Activated T-helper 1 cell treated with anti-CD3 and anti-CD28 coated beads, Interleukin-12 subunit alpha, Interleukin-12 subunit beta, Interleukin-2, Interleukin-4 antibody, amounts not matched to agents 30 ng/mL and 10 ng/mL and 1 ng/mL, durations not matched to agents 14 hours and 24 hours and 36 hours (primary cell): ENCODE measurements at regions of chr16 and their contacts with region 1.

Region 1: DNA sequence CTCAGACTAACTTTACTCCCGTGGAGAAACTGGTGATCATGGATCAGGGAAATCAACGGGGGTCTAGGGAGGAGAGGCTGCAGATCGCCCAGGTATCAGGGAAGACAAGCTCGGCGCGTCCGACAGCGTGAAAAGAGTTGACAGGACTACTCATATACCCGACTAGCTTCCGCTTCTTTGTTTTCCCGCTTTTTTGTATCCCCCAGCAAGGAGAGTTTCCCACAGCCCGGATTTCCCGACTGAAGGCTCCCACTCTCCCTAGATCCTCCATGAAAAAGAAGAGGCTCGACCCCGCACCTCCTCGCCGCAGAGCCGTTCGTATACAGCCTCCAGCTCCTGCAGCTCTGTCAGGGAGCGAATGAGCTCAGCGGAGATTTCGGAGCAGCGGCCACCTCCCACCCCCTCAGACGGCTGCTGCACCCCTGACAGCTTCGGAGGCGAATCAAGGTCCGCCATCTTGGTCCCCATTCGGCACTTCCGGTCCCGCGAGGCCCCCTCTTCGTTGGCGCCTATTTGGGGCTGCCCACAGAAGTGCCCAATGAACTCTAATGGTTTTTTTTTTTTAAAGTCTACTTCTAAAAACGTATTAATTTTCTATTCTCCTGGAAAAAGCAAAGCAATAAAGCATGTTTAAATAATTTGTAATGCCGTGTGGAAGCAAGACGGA is at the start of gene COG4:
- DNase-seq: peak; percentile 87
- H3K4me3 Mint-ChIP-seq: peak within 1 kb of the TSS; percentile 95
- H3K27ac Mint-ChIP-seq: peak within 1 kb of the TSS; percentile 97
- H3K4me1 Mint-ChIP-seq: peaks cover 49% of the 10 kb centered on the region
- H3K27me3 Mint-ChIP-seq: no peaks in the 10 kb centered on the region
- total RNA-seq, gene COG4: 42.5 and 44.1 TPM in 2 replicates

Region 2: GRCh38 chr16:70251629-70252354 is 271.4 kb before region 1 on chr16 and contains the start of gene EXOSC6:
- intact Hi-C with region 1: loop called (anchors 1 kb)
- DNase-seq: peak; percentile 90
- H3K4me3 Mint-ChIP-seq: peak within 1 kb of the TSS; percentile 91
- H3K27ac Mint-ChIP-seq: peak within 1 kb of the TSS; percentile 96
- H3K4me1 Mint-ChIP-seq: peaks cover 10% of the 10 kb centered on the region
- H3K27me3 Mint-ChIP-seq: no peaks in the 10 kb centered on the region
- total RNA-seq, gene EXOSC6: 40.5 and 42.1 TPM in 2 replicates

Region 3: DNA sequence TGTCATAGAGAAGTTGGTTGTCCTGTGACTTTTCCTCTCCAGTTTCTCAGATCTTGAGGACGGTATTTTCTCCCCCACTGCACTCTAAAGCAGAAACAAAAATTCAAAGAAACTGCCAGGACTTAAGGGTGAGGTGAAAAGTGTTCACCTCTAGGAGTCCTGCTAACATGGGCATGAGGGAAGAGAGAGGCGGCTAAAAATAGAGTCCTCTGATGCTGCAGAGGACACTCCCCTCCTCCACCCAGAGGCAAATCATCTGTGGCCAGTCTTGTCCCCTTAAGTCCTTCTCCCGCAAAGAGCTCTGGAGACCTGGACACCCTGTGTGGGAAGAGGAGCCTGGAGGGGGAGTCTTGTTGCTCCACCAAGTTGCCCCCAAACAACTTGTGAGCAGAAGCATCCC is 181.2 kb before region 1 on chr16:
- intact Hi-C with region 1: loop called (anchors 1 kb)
- DNase-seq: no peak
- H3K4me3 Mint-ChIP-seq: no peak overlapping the region
- H3K27ac Mint-ChIP-seq: no peak overlapping the region
- H3K4me1 Mint-ChIP-seq: peaks cover 5% of the 10 kb centered on the region
- H3K27me3 Mint-ChIP-seq: no peaks in the 10 kb centered on the region

Region 4: DNA sequence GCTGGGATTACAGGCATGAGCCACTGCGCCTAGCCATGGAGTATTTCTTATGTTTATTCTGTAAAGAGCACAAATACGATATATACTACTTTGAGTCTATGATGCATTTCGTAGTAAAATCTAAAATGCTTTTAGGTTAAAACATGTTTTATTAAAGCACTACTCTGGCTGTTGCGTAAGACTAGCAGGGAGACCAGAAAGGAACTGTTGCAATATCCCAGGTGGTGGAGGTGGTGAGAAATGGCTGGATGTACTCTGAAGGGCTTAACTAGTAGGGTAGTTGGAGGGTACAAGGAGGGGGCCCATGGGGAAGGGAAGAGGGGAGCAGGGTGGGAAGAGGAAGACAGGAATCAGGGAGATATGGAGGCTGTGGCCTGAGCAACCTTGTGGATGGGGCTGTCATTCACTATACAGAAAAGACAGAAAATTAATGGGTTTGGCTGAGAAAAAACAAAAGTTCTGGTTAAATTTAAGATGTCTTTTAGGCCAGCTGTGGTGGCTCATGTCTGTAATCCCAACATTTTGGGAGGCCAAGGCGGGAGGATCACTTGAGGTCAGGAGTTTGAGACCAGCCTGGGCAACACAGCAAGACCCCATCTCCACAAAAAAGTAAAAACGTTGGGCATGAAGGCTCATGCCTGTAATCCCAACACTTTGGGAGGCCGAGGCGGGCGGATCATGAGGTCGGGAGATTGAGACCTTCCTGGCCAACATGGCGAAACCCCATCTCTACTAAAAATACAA is 120.1 kb before region 1 on chr16:
- intact Hi-C with region 1: loop called (anchors 5 kb)
- DNase-seq: no peak
- H3K4me3 Mint-ChIP-seq: peak overlapping the region; percentile 10
- H3K27ac Mint-ChIP-seq: peak overlapping the region; percentile 92
- H3K4me1 Mint-ChIP-seq: peaks cover 43% of the 10 kb centered on the region
- H3K27me3 Mint-ChIP-seq: no peaks in the 10 kb centered on the region

Region 5: GRCh38 chr16:70438969-70439862 is 84.0 kb before region 1 on chr16 and contains the start of gene ST3GAL2:
- intact Hi-C with region 1: loop called (anchors 1 kb)
- DNase-seq: peak; percentile 92
- H3K4me3 Mint-ChIP-seq: peak within 1 kb of the TSS; percentile 98
- H3K27ac Mint-ChIP-seq: peak within 1 kb of the TSS; percentile 92
- H3K4me1 Mint-ChIP-seq: peaks cover 28% of the 10 kb centered on the region
- H3K27me3 Mint-ChIP-seq: no peaks in the 10 kb centered on the region
- total RNA-seq, gene ST3GAL2: 35.6 and 37.7 TPM in 2 replicates

Region 6: DNA sequence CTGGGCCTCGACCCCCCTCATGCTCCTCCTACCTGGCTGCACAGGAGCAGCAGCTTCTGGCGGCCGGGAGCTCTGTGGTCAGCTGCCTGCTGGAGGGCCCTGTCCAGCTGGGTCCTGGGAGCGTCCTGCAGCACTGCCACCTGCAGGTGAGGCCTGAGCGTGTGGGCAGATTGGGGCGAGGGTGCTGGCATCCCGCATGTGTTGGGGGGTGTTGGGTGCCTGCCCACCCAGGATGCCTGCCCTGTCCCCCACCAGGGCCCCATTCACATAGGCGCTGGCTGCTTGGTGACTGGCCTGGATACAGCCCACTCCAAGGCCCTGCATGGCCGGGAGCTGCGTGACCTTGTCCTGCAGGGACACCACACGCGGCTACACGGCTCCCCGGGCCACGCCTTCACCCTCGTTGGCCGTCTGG is 52.3 kb before region 1 on chr16:
- intact Hi-C with region 1: loop called (anchors 1 kb)
- DNase-seq: no peak
- H3K4me3 Mint-ChIP-seq: no peak overlapping the region
- H3K27ac Mint-ChIP-seq: no peak overlapping the region
- H3K4me1 Mint-ChIP-seq: no peaks in the 10 kb centered on the region
- H3K27me3 Mint-ChIP-seq: no peaks in the 10 kb centered on the region

Region 7: GRCh38 chr16:70495425-70496182 is 27.6 kb before region 1 on chr16:
- intact Hi-C with region 1: no loop called
- DNase-seq: no peak
- H3K4me3 Mint-ChIP-seq: no peak overlapping the region
- H3K27ac Mint-ChIP-seq: no peak overlapping the region
- H3K4me1 Mint-ChIP-seq: peaks cover 17% of the 10 kb centered on the region
- H3K27me3 Mint-ChIP-seq: no peaks in the 10 kb centered on the region